Activated CD4-positive, alpha-beta T cell treated with anti-CD3 and anti-CD28 coated beads, Interleukin-2, amount 10 ng/mL, durations not matched to agents 7 days and 5 days (primary cell): ENCODE measurements at regions of chr12 and their contacts with region 1.

Region 1: DNA sequence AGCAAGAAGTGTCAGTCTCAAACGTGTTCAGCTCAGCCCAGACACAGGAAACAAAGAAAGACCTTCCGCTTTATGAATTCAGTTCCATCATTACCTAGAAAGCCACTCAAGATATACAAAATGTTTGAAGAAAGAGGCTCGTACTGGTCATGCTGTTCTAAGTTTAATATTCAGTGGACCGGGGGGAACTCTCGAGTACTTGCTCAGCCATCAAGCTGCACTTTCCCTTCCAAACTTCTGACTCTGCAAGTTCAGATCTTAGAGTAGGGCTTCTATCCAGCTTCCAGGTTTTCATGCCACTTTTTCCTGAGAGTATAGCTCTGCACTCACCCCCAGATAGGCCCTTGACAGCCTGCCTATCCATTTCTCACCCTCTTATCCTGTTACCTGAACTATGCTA is 62.8 kb upstream of the OSBPL8 start:
- DNase-seq: no peak
- H3K4me3 Mint-ChIP-seq: no peak overlapping the region
- H3K27ac Mint-ChIP-seq: no peak overlapping the region
- H3K4me1 Mint-ChIP-seq: peaks cover 4% of the 10 kb centered on the region
- H3K27me3 Mint-ChIP-seq: peaks cover 2% of the 10 kb centered on the region

Region 2: DNA sequence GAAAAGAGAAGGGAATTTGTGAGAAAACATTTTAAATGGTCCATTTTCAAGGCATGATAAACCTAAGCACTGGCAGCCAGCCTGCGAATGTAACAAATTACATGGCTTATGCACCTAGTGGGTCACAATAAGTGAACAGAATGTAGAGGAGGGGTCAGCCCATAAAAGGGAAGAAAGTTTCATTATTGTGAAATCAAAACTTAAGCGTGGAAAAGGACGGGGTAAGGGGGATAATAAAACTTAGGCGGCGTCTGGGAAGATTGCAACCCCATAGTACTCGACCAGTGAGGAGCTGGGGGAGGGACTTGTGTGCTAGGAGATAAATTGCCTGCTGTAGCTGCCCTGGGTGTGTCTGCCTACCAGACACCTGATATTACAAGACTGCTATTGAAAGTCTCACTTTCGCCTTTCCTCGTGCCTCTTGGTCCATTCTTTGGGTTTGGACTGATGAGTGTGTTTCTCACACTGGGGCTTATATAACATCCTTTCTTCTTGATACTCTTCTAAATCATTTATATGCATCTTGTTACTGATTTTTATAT is 182.2 kb after region 1 on chr12:
- CTCF ChIA-PET with region 1: no interaction called
- POLR2A ChIA-PET with region 1: interaction called, 11 read pairs
- DNase-seq: no peak
- H3K4me3 Mint-ChIP-seq: no peak overlapping the region
- H3K27ac Mint-ChIP-seq: peak overlapping the region; percentile 69
- H3K4me1 Mint-ChIP-seq: peaks cover 10% of the 10 kb centered on the region
- H3K27me3 Mint-ChIP-seq: no peaks in the 10 kb centered on the region